Calu3 (cell line): ENCODE measurements at regions of chr12 and their contacts with region 1.

Region 1: DNA sequence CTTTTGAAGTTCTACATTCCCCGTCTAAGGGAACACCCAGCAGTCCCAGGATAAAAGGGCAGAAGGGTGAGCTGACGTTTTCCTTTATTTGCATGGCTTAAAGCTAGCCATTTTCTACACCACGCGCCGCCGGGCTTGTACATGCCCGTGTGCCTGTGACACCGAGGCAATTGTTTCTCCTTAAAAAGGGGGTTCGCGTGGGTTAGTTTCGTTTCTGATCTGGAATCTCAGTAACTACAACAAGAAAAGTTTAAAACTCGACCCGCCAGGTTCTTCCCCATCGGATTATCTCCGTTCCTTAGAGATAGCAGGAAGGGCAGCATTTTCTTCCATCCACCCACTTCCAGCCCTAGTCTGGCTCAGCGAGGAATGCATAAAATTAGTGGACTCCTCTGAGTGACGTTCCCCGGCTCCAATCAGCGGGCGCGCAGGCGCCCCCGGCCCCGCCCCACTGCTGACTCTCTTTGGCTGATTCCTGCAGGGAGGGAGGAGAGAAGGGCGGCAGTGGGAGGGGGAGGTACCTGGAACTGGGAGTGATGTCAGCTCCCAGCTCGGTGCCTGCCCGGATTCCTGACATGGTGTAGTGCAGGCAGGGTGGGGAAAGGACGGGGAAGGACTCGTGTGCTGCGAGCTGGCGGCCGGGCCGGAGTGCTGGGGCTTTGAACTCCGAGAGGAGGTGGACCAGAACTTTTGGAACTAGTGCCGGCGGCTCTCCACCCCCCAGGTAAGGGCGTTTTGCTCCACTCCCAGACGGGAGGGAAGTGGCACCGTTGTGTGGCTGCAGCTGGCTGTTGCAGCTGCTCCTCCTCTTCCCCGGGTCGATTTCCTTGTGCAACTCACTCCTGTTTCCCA is at the start of gene PPFIBP1:
- DNase-seq: peak; percentile 95
- H3K4me3 Mint-ChIP-seq: peak within 1 kb of the TSS; percentile 83
- H3K27ac Mint-ChIP-seq: peak within 1 kb of the TSS; percentile 86
- H3K4me1 Mint-ChIP-seq: peaks cover 44% of the 10 kb centered on the region
- H3K27me3 Mint-ChIP-seq: no peaks in the 10 kb centered on the region
- CTCF ChIP-seq: no peak
- total RNA-seq, gene PPFIBP1: 58.7 and 64.8 TPM in 2 replicates

Region 2: DNA sequence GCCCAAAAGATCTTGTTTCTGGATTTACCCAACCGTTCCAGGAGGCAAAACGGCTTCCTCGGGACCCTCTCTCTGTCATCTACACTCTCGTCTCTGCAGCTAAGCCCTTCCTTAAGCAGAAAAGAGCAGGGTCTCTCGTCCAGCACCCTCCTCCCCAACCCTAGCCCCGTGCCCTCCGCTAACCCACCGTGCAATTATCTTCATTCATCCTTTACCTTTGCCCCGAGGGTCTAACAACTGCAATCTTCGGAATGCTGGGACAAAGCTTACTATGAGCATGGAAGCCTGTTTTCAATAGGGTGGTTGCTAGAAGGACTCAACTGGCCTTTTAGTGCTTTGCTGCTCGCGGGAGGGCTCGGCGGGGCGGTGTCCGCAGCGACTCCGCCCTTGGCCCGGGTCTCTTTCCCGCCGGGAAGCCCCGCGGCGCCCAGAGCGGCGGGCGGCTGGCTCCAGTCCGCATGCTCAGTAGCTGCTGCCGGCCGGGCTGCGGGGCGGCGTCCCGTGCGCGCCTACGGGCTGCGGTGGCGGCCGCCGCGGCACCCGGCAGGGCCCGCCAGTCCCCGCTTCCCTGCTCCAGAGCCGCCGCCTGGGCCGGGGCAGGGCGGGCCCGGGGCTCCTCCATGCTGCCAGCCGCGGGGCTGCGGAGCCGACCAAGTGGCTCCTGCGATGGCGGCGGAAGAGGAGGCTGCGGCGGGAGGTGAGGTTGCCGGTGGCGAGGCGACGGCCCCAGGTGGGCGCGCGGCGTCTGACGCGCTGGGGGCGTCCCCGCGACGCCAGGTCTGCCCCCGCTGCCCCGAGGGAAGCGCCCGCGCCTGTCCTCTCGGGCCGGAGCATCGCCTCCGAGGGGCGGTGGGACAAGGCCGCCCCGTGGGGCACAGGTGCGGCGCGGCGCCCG is 191.2 kb before region 1 on chr12 and contains the start of gene BMAL2:
- CTCF ChIA-PET with region 1: no interaction called
- intact Hi-C with region 1: loop called (anchors 5 kb)
- DNase-seq: peak; percentile 67
- H3K4me3 Mint-ChIP-seq: peak within 1 kb of the TSS; percentile 81
- H3K27ac Mint-ChIP-seq: peak within 1 kb of the TSS; percentile 98
- H3K4me1 Mint-ChIP-seq: peaks cover 53% of the 10 kb centered on the region
- H3K27me3 Mint-ChIP-seq: no peaks in the 10 kb centered on the region
- CTCF ChIP-seq: no peak
- total RNA-seq, gene BMAL2: 68.2 and 71.2 TPM in 2 replicates

Region 3: DNA sequence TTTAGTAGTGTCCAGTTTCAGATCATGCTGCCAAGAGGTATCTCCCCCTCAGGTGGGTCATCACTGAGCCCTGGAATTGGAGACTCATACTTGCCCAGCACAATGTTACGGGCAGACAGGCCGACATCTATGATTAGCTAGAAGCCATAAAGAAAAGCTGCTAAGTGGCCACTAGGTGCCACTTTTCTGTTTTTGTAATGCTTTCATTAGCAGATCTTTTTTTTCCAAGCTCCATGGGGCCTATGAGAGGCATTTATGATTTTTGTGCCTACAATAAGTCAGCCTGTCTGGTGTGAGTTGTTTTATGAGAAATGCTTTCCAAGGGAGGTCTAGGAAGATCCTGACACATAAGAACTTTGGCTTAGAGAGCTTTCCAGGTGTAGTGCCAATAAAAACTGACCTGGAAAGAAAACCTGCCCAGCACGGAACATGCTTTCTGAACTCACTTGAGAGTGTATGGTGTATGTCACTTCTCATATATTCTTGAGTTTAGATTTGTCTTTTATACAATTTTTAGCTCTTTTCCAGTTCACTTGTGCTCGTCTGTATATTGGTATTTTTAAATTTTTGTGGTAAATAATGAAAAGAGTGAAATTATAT is 99.1 kb before region 1 on chr12:
- CTCF ChIA-PET with region 1: interaction called, 9 read pairs
- intact Hi-C with region 1: loop called (anchors 10 kb)
- DNase-seq: peak; percentile 8
- H3K4me3 Mint-ChIP-seq: no peak overlapping the region
- H3K27ac Mint-ChIP-seq: no peak overlapping the region
- H3K4me1 Mint-ChIP-seq: peaks cover 11% of the 10 kb centered on the region
- H3K27me3 Mint-ChIP-seq: no peaks in the 10 kb centered on the region
- CTCF ChIP-seq: peak; percentile 55

Region 4: DNA sequence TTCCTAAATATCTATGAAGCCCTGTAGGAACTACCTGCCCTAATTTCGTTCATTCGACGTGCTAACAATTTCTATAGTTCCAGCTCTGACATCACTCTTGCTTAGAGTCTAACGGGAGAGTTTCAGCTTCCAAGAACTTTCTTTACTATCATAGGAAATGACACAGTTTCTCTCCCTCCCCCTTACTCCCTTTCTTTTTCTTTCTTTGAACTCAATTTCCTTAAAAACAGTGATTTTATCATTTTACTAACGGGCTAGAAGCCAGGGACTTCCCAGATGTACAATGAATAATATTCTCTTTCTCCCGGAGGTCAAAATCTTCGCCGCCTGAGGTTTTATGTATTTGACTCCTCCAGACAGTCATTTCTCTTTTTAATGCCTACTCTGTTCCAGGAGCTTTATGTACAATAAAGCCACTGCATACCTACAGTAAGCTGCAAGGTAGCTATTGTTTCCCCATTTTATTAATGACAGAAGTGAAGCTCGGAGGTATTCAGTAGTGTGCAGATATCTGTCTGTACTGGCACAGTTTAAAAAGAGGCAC is 61.6 kb before region 1 on chr12:
- CTCF ChIA-PET with region 1: no interaction called
- intact Hi-C with region 1: loop called (anchors 5 kb)
- DNase-seq: no peak
- H3K4me3 Mint-ChIP-seq: no peak overlapping the region
- H3K27ac Mint-ChIP-seq: no peak overlapping the region
- H3K4me1 Mint-ChIP-seq: peaks cover 28% of the 10 kb centered on the region
- H3K27me3 Mint-ChIP-seq: no peaks in the 10 kb centered on the region
- CTCF ChIP-seq: no peak

Region 5: DNA sequence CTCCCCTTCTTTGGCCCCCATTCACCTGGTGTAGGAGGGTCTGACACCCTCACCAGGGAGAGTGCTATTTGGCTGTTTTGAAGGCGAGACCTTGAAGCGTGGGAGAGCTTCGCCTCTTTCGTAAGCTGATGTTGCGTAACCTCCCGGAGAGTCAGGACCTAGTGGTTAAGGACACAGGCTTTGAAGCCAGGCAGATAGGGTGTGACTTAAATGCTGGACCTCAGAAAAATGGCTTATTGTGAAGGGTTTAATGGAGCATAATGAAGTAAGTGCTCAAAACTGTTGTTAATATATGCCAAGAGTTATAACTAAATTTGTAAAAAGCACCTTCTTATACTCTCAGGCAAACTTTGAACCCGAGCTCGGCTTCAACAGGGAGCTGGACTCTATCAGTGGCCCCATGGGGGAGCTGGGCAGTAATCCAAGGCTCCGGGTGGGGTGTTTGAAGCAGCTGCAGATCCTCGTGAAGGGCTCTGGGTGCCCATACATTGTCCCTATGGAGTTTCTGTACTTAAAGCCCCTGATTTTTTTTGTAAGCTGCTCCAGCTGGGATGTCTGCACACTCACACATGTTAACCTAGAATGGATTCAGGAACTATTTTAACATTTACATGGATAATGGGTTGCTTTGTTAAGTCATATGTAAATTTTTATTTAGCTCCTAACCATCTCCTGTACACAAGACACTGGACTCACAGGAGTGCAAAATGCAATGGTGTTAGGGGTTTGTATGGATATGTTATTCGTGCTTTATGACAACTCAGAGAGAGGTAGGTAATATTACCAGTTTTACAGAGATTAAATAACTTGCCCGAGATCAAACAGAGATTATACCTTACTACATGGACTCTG is 26.2 kb after region 1 on chr12:
- CTCF ChIA-PET with region 1: interaction called, 5 read pairs
- intact Hi-C with region 1: loop called (anchors 1 kb)
- DNase-seq: peak; percentile 80
- H3K4me3 Mint-ChIP-seq: peak overlapping the region; percentile 22
- H3K27ac Mint-ChIP-seq: peak overlapping the region; percentile 43
- H3K4me1 Mint-ChIP-seq: peaks cover 58% of the 10 kb centered on the region
- H3K27me3 Mint-ChIP-seq: no peaks in the 10 kb centered on the region
- CTCF ChIP-seq: no peak

Region 6: DNA sequence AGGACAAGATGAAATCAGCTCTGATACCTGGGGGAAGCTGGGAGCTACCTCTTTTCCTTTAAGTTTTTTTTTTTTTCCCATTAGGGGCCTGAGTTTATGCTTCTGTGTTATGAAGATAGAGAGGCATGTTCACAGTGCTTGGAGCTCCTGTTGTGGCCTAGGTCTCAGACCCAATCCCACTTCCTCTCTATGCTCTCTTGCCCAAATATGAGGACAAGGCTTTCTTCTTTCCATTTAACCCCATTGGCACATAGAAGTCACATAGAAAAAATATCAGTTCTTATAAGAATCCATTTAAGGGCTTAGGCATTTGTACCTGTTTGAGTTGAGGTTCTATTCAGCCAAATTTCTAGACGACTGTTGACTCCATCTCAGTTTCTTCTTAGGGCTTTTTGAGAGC is 199.3 kb after region 1 on chr12:
- CTCF ChIA-PET with region 1: interaction called, 13 read pairs
- intact Hi-C with region 1: no loop called
- DNase-seq: no peak
- H3K4me3 Mint-ChIP-seq: no peak overlapping the region
- H3K27ac Mint-ChIP-seq: no peak overlapping the region
- H3K4me1 Mint-ChIP-seq: no peaks in the 10 kb centered on the region
- H3K27me3 Mint-ChIP-seq: no peaks in the 10 kb centered on the region
- CTCF ChIP-seq: no peak